HEK293 (cell line): ENCODE measurements at regions of chr17 and their contacts with region 1.

Region 1: GRCh38 chr17:44864866-44865660 is 17.4 kb downstream of the HIGD1B start:
- H3K4me3 ChIP-seq: no peak overlapping the region
- H3K27ac ChIP-seq: no peak overlapping the region
- H3K4me1 ChIP-seq: no peaks in the 10 kb centered on the region
- CTCF ChIP-seq: peak; percentile 63

Region 2: DNA sequence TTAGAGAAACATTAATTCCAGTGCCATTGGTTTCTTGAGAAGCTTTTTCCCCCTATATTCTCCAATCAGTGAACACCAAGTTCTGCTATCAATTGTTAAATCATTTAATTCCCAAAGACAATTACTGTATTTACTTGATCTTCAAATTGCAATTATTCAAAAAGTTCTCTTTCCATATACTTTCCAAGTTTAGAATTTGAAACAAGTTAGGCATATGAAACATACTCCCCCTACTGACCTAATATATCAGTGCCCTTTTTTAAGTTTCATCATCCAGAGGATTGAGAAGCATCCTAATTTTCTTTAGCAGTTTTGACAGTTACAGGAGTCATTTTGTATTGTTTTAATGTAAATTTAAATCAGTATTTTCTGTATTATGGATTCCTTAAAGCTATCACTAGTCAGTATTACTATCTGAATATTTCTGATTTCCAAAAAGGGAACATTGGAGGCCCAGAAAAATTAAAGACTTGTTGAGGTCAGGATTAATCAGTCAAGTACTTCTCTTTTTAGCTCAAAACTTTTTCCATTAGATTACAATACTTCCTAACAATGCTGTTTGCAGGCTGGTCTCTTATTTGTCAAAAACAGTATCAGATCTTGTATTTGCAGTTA is 192.5 kb before region 1 on chr17:
- CTCF ChIA-PET with region 1: no interaction called
- POLR2A ChIA-PET with region 1: no interaction called
- H3K4me3 ChIP-seq: no peak overlapping the region
- H3K27ac ChIP-seq: no peak overlapping the region
- H3K4me1 ChIP-seq: no peaks in the 10 kb centered on the region
- CTCF ChIP-seq: no peak

Region 3: GRCh38 chr17:44794851-44795413 is 70.1 kb before region 1 on chr17:
- CTCF ChIA-PET with region 1: interaction called, 14 read pairs
- POLR2A ChIA-PET with region 1: no interaction called
- H3K4me3 ChIP-seq: no peak overlapping the region
- H3K27ac ChIP-seq: no peak overlapping the region
- H3K4me1 ChIP-seq: no peaks in the 10 kb centered on the region
- CTCF ChIP-seq: no peak

Region 4: DNA sequence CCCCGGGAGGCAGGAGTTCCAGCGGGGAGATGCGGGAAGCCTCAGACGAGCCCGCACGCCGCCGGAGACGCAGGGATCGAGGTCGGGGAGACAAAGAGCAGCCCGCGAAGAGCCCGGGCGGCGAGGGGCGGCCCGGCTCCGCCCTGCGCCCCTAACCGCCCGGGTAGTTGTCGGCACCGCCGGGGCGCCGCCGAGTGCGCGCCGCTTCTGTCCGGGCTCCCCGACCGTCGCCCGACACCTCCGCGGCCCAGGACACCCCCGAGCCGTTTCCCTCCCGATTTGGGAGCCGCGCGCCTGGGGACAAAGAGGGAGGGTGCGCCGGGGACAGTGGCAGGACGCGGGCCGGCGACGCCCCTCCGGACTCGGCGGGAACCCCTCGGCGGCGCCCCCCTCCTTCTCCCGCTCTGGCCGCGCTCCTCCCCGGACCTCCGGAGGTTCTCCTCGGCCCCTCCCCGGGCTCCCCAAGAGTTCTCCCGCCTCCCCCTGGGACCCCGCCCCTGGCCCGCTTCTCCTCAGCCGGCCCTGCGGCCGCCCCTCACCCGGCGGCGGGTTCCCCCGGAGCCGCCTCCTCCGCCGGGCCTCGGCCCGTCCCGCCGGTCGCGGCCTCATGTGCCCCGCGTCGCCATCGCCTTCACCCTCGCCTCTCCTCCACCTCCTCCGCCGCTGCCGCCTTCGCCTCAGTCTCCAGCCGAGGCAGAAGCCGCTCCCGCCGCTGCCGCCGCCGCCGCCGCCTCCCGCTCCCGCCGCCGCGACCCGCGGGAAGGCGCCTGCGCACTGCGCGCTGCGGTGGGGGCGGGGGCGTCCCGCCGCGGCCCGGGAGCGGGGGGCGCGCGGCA is 35.3 kb before region 1 on chr17 and contains the start of gene GJC1:
- CTCF ChIA-PET with region 1: interaction called, 13 read pairs
- POLR2A ChIA-PET with region 1: no interaction called
- H3K4me3 ChIP-seq: peak within 1 kb of the TSS; percentile 78
- H3K27ac ChIP-seq: peak within 1 kb of the TSS; percentile 93
- H3K4me1 ChIP-seq: peaks cover 14% of the 10 kb centered on the region
- CTCF ChIP-seq: no peak

Region 5: DNA sequence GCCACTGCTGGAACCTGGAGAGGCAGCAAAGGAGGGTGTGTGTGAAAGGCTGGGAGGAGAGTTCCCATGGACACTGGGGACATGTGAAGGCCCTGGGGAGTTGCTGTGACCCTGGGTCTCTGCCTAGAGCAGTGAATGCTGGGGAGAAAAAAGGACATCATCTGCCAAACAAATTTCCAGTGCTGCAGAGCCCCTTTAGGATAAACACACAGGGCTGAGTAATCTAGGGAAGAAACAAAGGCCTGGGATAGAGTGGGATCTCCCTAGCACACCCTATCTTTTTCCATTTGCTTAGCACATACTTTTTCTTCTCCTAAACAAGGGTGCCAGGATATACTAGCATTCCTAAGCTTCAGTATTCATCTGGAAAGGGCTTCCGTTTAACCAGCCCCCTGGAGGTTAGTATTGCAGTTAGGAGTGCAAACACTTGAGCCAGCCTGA is 20.7 kb before region 1 on chr17:
- CTCF ChIA-PET with region 1: interaction called, 19 read pairs
- POLR2A ChIA-PET with region 1: no interaction called
- H3K4me3 ChIP-seq: no peak overlapping the region
- H3K27ac ChIP-seq: no peak overlapping the region; the same call in 1 of the 2 replicates
- H3K4me1 ChIP-seq: peaks cover 3% of the 10 kb centered on the region; the same call in 1 of the 2 replicates
- CTCF ChIP-seq: no peak

Region 6: GRCh38 chr17:44854192-44854591 is 10.9 kb before region 1 on chr17:
- CTCF ChIA-PET with region 1: interaction called, 10 read pairs
- POLR2A ChIA-PET with region 1: no interaction called
- H3K4me3 ChIP-seq: no peak overlapping the region
- H3K27ac ChIP-seq: no peak overlapping the region
- H3K4me1 ChIP-seq: no peaks in the 10 kb centered on the region
- CTCF ChIP-seq: no peak

Region 7: GRCh38 chr17:44878627-44879221 is 13.7 kb after region 1 on chr17:
- CTCF ChIA-PET with region 1: interaction called, 83 read pairs
- POLR2A ChIA-PET with region 1: no interaction called
- H3K4me3 ChIP-seq: no peak overlapping the region
- H3K27ac ChIP-seq: no peak overlapping the region
- H3K4me1 ChIP-seq: no peaks in the 10 kb centered on the region
- CTCF ChIP-seq: no peak

Region 8: DNA sequence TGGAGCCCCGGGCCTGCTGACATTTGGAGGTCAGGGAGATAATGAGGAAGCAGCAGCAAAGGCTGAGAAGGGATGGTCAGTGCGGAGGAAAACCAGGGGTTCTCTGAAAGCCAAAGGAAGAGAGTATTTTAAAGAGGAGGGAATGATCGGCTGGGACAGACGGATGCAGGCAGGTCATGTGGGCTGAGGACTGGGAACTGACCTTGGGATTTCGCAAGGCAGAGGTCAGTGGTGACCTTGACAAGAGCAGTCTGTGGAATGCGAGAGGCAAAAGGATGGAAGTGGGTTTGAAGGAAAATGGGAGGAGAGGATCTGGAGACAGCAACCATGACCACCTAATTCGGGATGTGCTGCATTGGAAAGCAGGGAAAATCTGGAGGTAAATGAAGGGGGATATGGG is 23.9 kb after region 1 on chr17:
- CTCF ChIA-PET with region 1: interaction called, 21 read pairs
- POLR2A ChIA-PET with region 1: interaction called, 3 read pairs
- H3K4me3 ChIP-seq: no peak overlapping the region
- H3K27ac ChIP-seq: no peak overlapping the region
- H3K4me1 ChIP-seq: no peaks in the 10 kb centered on the region
- CTCF ChIP-seq: no peak

Region 9: GRCh38 chr17:44988044-44988942 is 123.2 kb after region 1 on chr17:
- CTCF ChIA-PET with region 1: no interaction called
- POLR2A ChIA-PET with region 1: no interaction called
- H3K4me3 ChIP-seq: no peak overlapping the region
- H3K27ac ChIP-seq: no peak overlapping the region
- H3K4me1 ChIP-seq: no peaks in the 10 kb centered on the region
- CTCF ChIP-seq: no peak

Region 10: GRCh38 chr17:45013021-45013997 is 148.2 kb after region 1 on chr17:
- CTCF ChIA-PET with region 1: no interaction called
- POLR2A ChIA-PET with region 1: no interaction called
- H3K4me3 ChIP-seq: no peak overlapping the region
- H3K27ac ChIP-seq: no peak overlapping the region
- H3K4me1 ChIP-seq: no peaks in the 10 kb centered on the region
- CTCF ChIP-seq: no peak